Psoas muscle (tissue), 8 donors: ENCODE measurements at regions of chr6 and their contacts with region 1.

Region 1: GRCh38 chr6:117449549-117450439 is 24.1 kb upstream of the ROS1 start:
- DNase-seq: no peak
- ATAC-seq: peak in 1 of 4 donors; percentile 72
- H3K4me3 ChIP-seq: no peak overlapping the region
- H3K27ac ChIP-seq: no peak overlapping the region
- H3K4me1 ChIP-seq: peaks cover 12% of the 10 kb centered on the region
- H3K27me3 ChIP-seq: no peaks in the 10 kb centered on the region
- CTCF ChIP-seq: peak; percentile 84

Region 2: GRCh38 chr6:117265410-117266256 is 184.2 kb before region 1 on chr6 and contains the start of gene VGLL2:
- intact Hi-C with region 1: no loop called
- DNase-seq: peak; percentile 79 to 94
- ATAC-seq: peak; percentile 85 to 92 (median 88)
- H3K4me3 ChIP-seq: peak within 1 kb of the TSS; percentile 90
- H3K27ac ChIP-seq: peak within 1 kb of the TSS; percentile 95
- H3K4me1 ChIP-seq: peaks cover 23% of the 10 kb centered on the region
- H3K27me3 ChIP-seq: peaks cover 0 to 7% (median 3%) of the 10 kb centered on the region in 3 donors
- CTCF ChIP-seq: peak; percentile 41
- total RNA-seq, gene VGLL2: 60.2 to 108 (median 83.4) TPM

Region 3: DNA sequence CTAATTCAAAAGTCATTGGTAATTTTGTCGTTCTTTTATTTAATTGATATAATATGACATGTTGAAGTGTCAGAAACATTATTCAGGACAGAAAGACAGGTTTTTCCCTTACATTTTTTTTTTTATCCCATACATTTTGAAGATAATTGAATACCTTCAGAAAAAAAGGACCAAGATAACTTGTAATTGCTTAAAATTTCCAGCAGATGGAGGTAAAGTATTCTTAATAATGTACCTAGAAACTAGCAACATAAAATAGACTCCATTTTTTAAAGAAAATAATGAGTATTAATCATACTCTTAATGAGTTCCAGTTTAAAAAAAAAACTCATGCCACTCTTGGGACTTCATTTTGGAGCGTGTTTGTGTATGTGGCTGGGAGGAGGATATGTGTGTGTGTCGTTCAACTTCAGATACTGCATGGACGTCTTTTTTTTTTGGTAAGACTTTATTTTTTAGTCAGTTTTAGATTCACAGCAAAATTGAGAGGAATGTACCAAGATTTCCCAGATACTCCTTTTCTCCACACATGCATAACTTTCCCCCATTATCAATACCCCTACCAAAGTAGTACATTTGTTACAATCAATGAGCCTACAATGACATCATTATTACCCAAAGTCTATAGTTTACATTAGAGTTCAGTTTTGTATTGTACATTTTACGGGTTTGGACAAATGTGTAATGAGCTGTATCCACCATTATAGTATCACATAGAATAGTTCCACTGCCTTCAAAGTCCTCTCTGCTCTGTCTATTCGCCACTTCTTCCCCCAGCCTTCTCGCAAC is 103.5 kb before region 1 on chr6:
- intact Hi-C with region 1: loop called (anchors 5 kb)
- DNase-seq: no peak
- ATAC-seq: peak in 3 of 4 donors; percentile 34 to 74 (median 37)
- H3K4me3 ChIP-seq: peak overlapping the region; percentile 35
- H3K27ac ChIP-seq: no peak overlapping the region
- H3K4me1 ChIP-seq: no peaks in the 10 kb centered on the region
- H3K27me3 ChIP-seq: no peaks in the 10 kb centered on the region
- CTCF ChIP-seq: peak; percentile 65

Region 4: GRCh38 chr6:117555882-117556498 is 106.2 kb after region 1 on chr6:
- intact Hi-C with region 1: loop called (anchors 1 to 2 kb)
- DNase-seq: no peak
- ATAC-seq: peak in 1 of 4 donors; percentile 73
- H3K4me3 ChIP-seq: no peak overlapping the region
- H3K27ac ChIP-seq: no peak overlapping the region
- H3K4me1 ChIP-seq: peaks cover 7% of the 10 kb centered on the region
- H3K27me3 ChIP-seq: no peaks in the 10 kb centered on the region
- CTCF ChIP-seq: peak; percentile 90

Region 5: DNA sequence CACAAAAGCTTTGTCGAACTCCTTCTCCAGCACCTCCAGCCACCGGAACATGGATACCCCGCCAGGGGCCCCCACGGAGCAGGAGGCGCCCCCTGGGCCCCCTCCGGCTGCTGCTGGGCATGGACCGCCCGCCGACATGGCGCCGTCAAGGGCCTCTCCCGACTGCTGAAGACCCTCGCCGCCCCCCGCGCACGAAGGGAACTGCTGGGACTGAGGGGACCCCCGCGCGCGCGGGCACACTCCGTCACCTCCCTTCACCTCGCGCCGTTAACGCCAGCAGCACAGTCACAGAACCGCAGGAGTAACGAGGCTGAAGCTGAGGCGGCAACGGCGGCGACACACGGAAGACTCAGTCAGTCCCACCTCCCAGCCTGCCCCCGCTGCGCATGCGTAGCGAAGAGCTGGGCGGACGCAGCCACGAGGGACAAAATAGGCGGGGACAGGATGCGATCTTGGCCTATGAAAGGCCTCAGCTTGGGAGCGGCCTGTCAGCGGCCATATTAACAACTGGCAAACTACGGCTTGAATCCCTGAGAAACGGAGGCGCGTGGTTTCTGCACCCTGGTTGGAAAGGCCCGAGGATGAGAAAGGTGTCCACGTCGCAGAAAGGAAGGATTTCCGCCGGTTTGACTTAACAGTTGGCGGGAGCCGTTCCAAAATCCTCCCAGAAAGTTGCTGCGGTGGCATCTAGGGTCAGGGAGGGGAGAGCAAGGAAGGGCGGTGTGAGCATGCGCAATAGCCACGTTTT is 152.5 kb after region 1 on chr6 and contains the start of gene GOPC:
- intact Hi-C with region 1: loop called (anchors 5 kb)
- DNase-seq: peak; percentile 95 to 98
- ATAC-seq: peak; percentile 99
- H3K4me3 ChIP-seq: peak within 1 kb of the TSS; percentile 89
- H3K27ac ChIP-seq: peak within 1 kb of the TSS; percentile 96
- H3K4me1 ChIP-seq: peaks cover 28% of the 10 kb centered on the region
- H3K27me3 ChIP-seq: no peaks in the 10 kb centered on the region
- CTCF ChIP-seq: no peak
- total RNA-seq, gene GOPC: 11.5 to 18.2 (median 15.6) TPM